Mammary epithelial cell (primary cell): ENCODE measurements at regions of chr1 and their contacts with region 1.

Region 1: GRCh38 chr1:202589190-202590030 is 120.8 kb downstream of the SYT2 start:
- DNase-seq: peak; percentile 97
- H3K4me3 ChIP-seq: no peak overlapping the region
- H3K27ac ChIP-seq: peak overlapping the region; percentile 91
- H3K4me1 ChIP-seq: peaks cover 85% of the 10 kb centered on the region
- H3K27me3 ChIP-seq: no peaks in the 10 kb centered on the region
- CTCF ChIP-seq: no peak

Region 2: GRCh38 chr1:202376247-202376646 is 213.2 kb before region 1 on chr1:
- CTCF ChIA-PET with region 1: no interaction called
- dilution Hi-C with region 1: no loop called
- in situ Hi-C with region 1: no loop called
- intact Hi-C with region 1: no loop called
- DNase-seq: no peak
- H3K4me3 ChIP-seq: no peak overlapping the region
- H3K27ac ChIP-seq: no peak overlapping the region
- H3K4me1 ChIP-seq: peaks cover 7% of the 10 kb centered on the region
- H3K27me3 ChIP-seq: no peaks in the 10 kb centered on the region
- CTCF ChIP-seq: no peak

Region 3: GRCh38 chr1:202540014-202540413 is 49.4 kb before region 1 on chr1:
- CTCF ChIA-PET with region 1: no interaction called
- dilution Hi-C with region 1: no loop called
- in situ Hi-C with region 1: no loop called
- intact Hi-C with region 1: loop called (anchors 5 kb)
- DNase-seq: no peak
- H3K4me3 ChIP-seq: peak overlapping the region; percentile 29 to 42 (median 34)
- H3K27ac ChIP-seq: peak overlapping the region; percentile 64
- H3K4me1 ChIP-seq: peaks cover 10% of the 10 kb centered on the region
- H3K27me3 ChIP-seq: no peaks in the 10 kb centered on the region
- CTCF ChIP-seq: no peak

Region 4: DNA sequence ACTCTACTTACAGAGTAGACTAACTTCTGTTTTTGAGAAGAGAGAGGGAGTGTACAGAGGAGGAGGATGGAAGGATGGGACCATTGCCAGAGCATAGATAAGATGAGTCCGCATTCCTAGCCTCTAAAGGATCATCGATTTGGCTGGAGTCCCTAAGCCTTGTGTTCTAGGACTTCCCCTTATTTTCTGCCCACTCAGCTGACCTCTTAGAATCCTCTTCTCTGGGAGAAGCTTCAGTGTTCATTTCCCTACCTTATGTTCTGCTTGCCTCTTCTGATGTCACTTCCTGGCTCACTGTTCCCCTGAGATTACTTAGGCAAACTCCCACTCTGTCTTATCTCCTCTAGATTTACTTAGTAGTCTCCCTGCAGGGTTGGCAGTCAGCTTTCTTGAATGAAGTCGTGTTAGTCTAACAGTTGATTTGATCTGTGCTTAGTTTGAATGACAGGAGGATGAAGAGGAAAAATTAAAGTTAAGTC is 35.8 kb before region 1 on chr1:
- CTCF ChIA-PET with region 1: no interaction called
- dilution Hi-C with region 1: no loop called
- in situ Hi-C with region 1: no loop called
- intact Hi-C with region 1: no loop called
- DNase-seq: no peak
- H3K4me3 ChIP-seq: no peak overlapping the region
- H3K27ac ChIP-seq: no peak overlapping the region
- H3K4me1 ChIP-seq: no peaks in the 10 kb centered on the region
- H3K27me3 ChIP-seq: no peaks in the 10 kb centered on the region
- CTCF ChIP-seq: no peak